ENCODE measurements at regions of chr9 and their contacts with region 1.

Region 1: DNA sequence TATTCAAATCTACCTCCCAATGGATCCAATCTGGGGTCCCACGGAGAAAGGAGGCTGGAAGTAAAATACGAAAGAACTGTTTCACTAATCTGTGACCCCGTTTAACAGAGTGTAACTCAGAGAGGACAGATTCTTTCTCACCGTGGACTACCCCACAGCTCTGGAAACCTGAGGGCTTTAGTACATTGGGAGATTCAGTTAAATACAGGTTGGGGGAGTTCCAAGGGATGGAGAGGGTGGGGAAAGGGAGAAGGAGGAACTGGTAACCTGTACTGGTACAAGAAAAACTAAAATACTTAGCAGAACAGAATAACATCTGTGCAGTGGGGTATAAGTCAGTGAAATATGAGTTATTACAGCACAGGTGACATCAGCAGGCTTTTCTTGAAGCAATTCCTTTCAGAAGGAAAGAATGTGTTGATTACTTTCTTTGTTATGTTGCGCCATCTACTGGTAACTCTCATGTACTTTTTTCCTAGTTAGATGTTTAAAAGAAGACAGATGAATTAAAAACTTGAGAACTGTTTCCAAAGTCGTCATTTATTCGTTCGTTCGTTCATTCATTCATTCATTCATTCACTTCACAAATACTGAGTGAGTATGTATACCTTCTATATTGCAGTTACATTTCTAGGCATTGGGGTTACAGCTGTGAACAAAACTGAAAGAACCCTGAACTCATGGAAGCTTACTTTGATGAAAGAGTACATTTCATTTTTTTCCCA is 30.0 kb upstream of the STOM start:
- DNase-seq: peak; percentile 69
- H3K4me3 ChIP-seq: no peak overlapping the region
- H3K27ac ChIP-seq: peak overlapping the region; percentile 81
- H3K4me1 ChIP-seq: peaks cover 26% of the 10 kb centered on the region
- H3K27me3 ChIP-seq: no peaks in the 10 kb centered on the region
- CTCF ChIP-seq: peak; percentile 37 to 49

Region 2: DNA sequence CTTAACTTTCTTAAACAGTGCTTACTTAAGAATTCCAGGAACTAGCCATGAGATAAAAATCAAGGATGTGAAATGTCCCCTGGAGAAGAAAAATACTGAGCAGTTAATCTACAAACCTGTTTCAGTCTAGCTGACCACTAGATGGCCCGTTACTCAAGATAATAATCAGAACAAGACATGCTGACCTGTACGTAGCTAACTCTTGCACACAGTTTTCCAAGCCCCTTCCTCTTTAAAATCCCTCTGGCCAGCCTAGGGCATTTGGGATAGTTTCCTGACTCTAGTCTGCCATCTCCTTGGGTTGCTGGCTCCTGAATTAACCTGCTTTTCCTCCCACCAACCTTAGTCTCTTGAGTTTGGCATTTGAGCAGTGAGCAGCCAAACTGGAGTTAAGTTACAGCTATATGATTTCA is 414.2 kb before region 1 on chr9:
- CTCF ChIA-PET with region 1: interaction called, 3 read pairs
- dilution Hi-C with region 1: no loop called
- in situ Hi-C with region 1: loop called in 1 of 2 experiments (anchors 25 kb)
- intact Hi-C with region 1: loop called (anchors 1 kb)
- DNase-seq: peak; percentile 34
- H3K4me3 ChIP-seq: no peak overlapping the region
- H3K27ac ChIP-seq: no peak overlapping the region
- H3K4me1 ChIP-seq: no peaks in the 10 kb centered on the region
- H3K27me3 ChIP-seq: no peaks in the 10 kb centered on the region
- CTCF ChIP-seq: peak; percentile 56 to 67

Region 3: GRCh38 chr9:121201738-121202533 is 198.1 kb before region 1 on chr9 and contains the start of gene RAB14:
- CTCF ChIA-PET with region 1: interaction called, 8 read pairs
- dilution Hi-C with region 1: loop called (anchors 25 kb)
- in situ Hi-C with region 1: no loop called
- intact Hi-C with region 1: no loop called
- DNase-seq: peak; percentile 97
- H3K4me3 ChIP-seq: peak within 1 kb of the TSS; percentile 69 to 97 (median 85)
- H3K27ac ChIP-seq: peak within 1 kb of the TSS; percentile 64
- H3K4me1 ChIP-seq: peaks cover 28% of the 10 kb centered on the region
- H3K27me3 ChIP-seq: no peaks in the 10 kb centered on the region
- CTCF ChIP-seq: peak; percentile 26 to 68
- total RNA-seq, gene RAB14: 27.5 to 74.6 TPM

Region 4: GRCh38 chr9:121286973-121287741 is 112.9 kb before region 1 on chr9:
- CTCF ChIA-PET with region 1: interaction called, 4 read pairs
- dilution Hi-C with region 1: loop called (anchors 5 kb)
- in situ Hi-C with region 1: no loop called
- intact Hi-C with region 1: loop called (anchors 2 kb)
- DNase-seq: peak; percentile 99
- H3K4me3 ChIP-seq: peak overlapping the region in 1 of 3 experiments; percentile 32
- H3K27ac ChIP-seq: peak overlapping the region; percentile 100
- H3K4me1 ChIP-seq: peaks cover 63% of the 10 kb centered on the region
- H3K27me3 ChIP-seq: no peaks in the 10 kb centered on the region
- CTCF ChIP-seq: peak; percentile 17 to 46

Region 5: DNA sequence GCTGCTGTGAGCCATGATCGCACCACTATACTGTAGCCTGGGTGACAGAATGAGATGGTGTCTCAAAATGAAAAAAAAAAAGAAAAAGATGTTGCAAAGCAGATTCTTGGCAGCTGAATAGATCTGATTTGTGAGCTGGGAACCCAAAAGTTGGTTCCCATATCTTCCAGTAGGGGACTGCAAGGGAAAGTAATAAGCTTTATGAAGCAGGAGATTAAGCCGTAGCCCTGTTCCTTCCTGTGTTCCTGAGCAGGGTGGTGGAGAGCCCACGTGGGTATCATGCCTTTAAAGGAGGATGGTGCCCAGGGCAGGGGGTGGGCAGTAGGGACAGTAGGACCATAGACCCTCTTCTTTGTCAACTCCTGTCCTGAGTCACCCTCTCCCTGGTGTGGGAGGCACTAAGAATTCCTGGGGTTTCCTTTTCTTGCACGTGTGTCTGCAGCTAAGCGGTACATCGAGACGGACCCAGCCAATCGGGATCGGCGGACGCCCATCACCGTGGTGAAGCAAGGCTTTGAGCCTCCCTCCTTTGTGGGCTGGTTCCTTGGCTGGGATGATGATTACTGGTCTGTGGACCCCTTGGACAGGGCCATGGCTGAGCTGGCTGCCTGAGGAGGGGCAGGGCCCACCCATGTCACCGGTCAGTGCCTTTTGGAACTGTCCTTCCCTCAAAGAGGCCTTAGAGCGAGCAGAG is 67.9 kb before region 1 on chr9:
- CTCF ChIA-PET with region 1: interaction called, 3 read pairs
- dilution Hi-C with region 1: loop called (anchors 10 kb)
- in situ Hi-C with region 1: no loop called
- intact Hi-C with region 1: no loop called
- DNase-seq: no peak
- H3K4me3 ChIP-seq: no peak overlapping the region
- H3K27ac ChIP-seq: no peak overlapping the region
- H3K4me1 ChIP-seq: peaks cover 22% of the 10 kb centered on the region
- H3K27me3 ChIP-seq: no peaks in the 10 kb centered on the region
- CTCF ChIP-seq: peak in 1 of 2 donors; percentile 30

Region 6: DNA sequence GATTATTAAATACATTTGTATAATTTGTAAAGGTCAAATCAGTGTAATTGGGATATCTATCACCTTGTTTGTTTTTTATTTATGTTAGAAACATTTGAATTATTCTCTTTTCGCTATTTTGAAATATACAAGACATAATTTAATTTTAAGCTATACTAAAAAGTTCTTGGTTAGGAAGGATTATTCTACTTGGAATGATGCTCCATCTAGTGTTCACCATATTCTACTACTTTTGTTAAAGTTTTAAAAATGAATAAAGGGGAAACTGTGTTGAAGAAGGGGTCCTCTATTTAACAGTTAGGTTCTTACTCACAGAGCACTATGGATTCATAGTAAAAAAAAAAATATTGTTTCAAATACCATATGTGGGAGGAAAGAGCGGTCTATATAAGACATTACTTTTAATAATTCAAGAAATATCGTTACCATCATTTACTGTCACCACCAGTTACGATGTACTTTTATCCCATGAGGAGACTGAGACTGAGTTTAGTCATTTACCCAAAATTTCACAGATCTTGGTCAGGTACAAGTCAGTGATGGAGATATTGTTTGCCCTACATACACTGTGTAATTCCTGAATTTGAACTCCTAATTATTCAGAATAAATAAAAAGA is 23.7 kb before region 1 on chr9:
- CTCF ChIA-PET with region 1: interaction called, 14 read pairs
- dilution Hi-C with region 1: no loop called
- in situ Hi-C with region 1: no loop called
- intact Hi-C with region 1: loop called (anchors 1 kb)
- DNase-seq: no peak
- H3K4me3 ChIP-seq: no peak overlapping the region
- H3K27ac ChIP-seq: no peak overlapping the region
- H3K4me1 ChIP-seq: peaks cover 39% of the 10 kb centered on the region
- H3K27me3 ChIP-seq: no peaks in the 10 kb centered on the region
- CTCF ChIP-seq: peak; percentile 12 to 51

Region 7: DNA sequence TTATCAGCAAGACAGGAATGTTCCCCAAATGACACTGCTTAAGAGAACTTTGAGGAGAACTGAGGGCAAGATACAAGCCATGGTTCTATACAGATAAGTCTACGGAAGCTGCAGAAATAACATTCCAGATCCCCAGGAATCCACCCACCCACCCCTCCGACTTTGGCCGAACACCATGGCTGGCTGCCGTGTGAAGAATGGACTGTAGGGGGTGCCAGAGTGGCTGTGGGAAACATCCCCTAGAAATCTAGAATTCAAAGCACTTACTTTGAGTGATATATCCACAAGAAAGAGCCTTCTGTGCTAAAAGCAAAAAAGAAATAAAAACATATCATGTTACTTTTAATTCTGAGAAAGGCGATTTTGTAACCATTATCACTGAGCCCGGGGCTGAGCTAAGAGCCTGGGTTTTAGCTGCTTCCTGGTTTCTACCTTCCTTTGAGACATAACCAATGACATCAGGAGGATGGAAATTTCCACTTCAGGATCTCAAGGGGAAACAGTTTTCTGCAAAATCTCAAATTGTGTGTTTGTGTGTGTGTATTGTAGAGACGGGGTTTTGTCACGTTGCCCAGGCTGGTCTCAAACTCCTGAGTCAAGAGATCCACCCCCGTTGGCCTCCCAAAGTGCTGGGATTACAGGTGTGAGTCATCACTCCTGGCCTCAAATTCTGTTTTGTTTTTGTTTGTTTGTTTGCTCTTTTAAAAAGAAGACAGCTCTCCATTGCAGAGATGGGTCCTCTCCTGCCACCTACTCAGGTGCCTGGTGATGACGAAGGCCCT is 63.2 kb after region 1 on chr9:
- CTCF ChIA-PET with region 1: no interaction called
- dilution Hi-C with region 1: no loop called
- in situ Hi-C with region 1: no loop called
- intact Hi-C with region 1: no loop called
- DNase-seq: no peak
- H3K4me3 ChIP-seq: no peak overlapping the region
- H3K27ac ChIP-seq: no peak overlapping the region
- H3K4me1 ChIP-seq: no peaks in the 10 kb centered on the region
- H3K27me3 ChIP-seq: peaks cover 10% of the 10 kb centered on the region
- CTCF ChIP-seq: peak; percentile 59 to 74

Region 8: GRCh38 chr9:121568343-121569265 is 168.6 kb after region 1 on chr9:
- CTCF ChIA-PET with region 1: no interaction called
- dilution Hi-C with region 1: no loop called
- in situ Hi-C with region 1: no loop called
- intact Hi-C with region 1: no loop called
- DNase-seq: no peak
- H3K4me3 ChIP-seq: no peak overlapping the region
- H3K27ac ChIP-seq: no peak overlapping the region
- H3K4me1 ChIP-seq: peaks cover 4% of the 10 kb centered on the region
- H3K27me3 ChIP-seq: no peaks in the 10 kb centered on the region
- CTCF ChIP-seq: no peak

Measured in mammary epithelial cell (primary cell).